A549 (cell line): ENCODE measurements at regions of chr9 and their contacts with region 1.

Region 1: DNA sequence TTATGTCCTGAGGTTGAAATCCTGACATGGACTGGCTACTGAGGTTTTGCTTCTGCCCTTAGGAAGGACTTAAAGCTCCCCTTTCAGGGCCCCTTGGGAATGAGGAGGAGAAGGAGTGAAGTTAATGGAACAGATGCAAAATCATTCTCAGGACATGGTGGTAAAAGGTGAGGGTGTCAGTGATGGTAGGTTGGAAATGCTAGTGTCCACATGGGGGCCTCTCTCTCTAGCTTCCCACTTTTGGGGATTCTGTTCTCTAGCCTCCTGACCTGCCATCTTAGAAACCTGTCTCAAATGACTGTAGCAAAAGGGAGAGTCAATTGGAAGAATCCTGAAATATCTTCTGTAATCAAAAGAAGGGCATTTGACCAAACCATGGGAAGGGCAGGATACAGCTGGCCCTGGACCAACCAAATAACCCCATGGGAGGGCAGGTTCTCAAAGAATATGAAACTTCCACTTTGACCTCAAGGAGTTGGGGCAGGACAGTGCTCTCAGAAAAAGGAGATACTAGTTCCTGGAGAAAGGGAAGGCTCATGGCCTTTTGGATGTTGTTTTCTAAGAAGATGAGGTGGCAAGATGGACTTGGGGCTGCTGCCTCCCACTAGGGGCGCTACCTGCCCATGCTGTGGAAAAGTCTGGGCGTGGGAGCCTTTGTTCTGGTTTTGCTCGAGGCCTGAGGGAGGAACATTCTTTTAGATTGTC is 21.2 kb upstream of the MLANA start:
- DNase-seq: peak; percentile 53 to 56
- ATAC-seq: peak; percentile 43 to 87; a peak in 4 of 6 replicates
- H3K4me3 ChIP-seq: no peak overlapping the region
- H3K27ac ChIP-seq: 0 out of 6 replicates have a peak overlapping the region, but pooled peaks of 1 of the 2 experiments have one; percentile 13
- H3K4me1 ChIP-seq: no peaks in the 10 kb centered on the region
- CTCF ChIP-seq: 0 out of 3 replicates have a peak, but pooled peaks have one; percentile 12
- EP300 ChIP-seq: no peak
- POLR2A ChIP-seq: no peak
- RAD21 ChIP-seq: peak in 1 of 2 experiments; percentile 62; a peak in 2 of 5 replicates

Region 2: GRCh38 chr9:5843794-5844504 is 25.5 kb before region 1 on chr9:
- CTCF ChIA-PET with region 1: interaction called, 11 read pairs
- POLR2A ChIA-PET with region 1: no interaction called
- DNase-seq: peak; percentile 57 to 81
- ATAC-seq: peak; percentile 79 to 85
- H3K4me3 ChIP-seq: no peak overlapping the region
- H3K27ac ChIP-seq: peak overlapping the region; percentile 69 to 87
- H3K4me1 ChIP-seq: peaks cover 53% of the 10 kb centered on the region
- CTCF ChIP-seq: no peak
- EP300 ChIP-seq: no peak
- POLR2A ChIP-seq: no peak
- RAD21 ChIP-seq: no peak; a peak in 1 of 5 replicates

Region 3: DNA sequence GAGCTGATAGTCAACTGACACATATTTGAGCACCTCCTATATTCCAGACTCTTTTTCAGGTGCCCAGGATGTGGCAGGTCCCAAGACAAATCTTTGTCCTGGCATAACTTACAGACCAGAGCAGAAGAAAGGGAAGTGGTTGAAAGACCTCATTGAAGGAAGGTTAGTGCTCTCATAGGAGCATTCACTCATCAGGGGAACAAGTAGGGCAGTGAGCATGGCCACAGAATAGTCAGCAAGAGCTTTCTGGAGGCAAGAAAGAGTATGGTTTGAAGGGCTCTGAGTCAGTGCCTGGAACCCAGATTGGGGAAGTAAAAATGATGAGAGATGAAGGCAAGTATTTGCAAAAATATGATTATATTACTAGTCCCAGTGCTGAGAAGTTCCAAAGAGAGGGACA is 11.5 kb before region 1 on chr9:
- CTCF ChIA-PET with region 1: interaction called, 15 read pairs
- POLR2A ChIA-PET with region 1: no interaction called
- DNase-seq: no peak
- ATAC-seq: no peak
- H3K4me3 ChIP-seq: no peak overlapping the region
- H3K27ac ChIP-seq: no peak overlapping the region
- H3K4me1 ChIP-seq: peaks cover under 1% of the 10 kb centered on the region; the same call in 2 of the 3 replicates
- CTCF ChIP-seq: no peak
- EP300 ChIP-seq: no peak
- POLR2A ChIP-seq: no peak
- RAD21 ChIP-seq: no peak

Region 4: GRCh38 chr9:5879419-5880181 is 10.1 kb after region 1 on chr9:
- CTCF ChIA-PET with region 1: interaction called, 64 read pairs
- POLR2A ChIA-PET with region 1: no interaction called
- DNase-seq: peak; percentile 70 to 81
- ATAC-seq: peak; percentile 88 to 92
- H3K4me3 ChIP-seq: peak overlapping the region; percentile 26; the same call in 1 of the 3 replicates
- H3K27ac ChIP-seq: peak overlapping the region; percentile 69 to 91
- H3K4me1 ChIP-seq: peaks cover 34% of the 10 kb centered on the region
- CTCF ChIP-seq: no peak
- EP300 ChIP-seq: no peak
- POLR2A ChIP-seq: no peak
- RAD21 ChIP-seq: no peak